Activated B cell treated with CpG ODN at 0.5 μM for 24 hours (primary cell): ENCODE measurements at regions of chr11 and their contacts with region 1.

Region 1: DNA sequence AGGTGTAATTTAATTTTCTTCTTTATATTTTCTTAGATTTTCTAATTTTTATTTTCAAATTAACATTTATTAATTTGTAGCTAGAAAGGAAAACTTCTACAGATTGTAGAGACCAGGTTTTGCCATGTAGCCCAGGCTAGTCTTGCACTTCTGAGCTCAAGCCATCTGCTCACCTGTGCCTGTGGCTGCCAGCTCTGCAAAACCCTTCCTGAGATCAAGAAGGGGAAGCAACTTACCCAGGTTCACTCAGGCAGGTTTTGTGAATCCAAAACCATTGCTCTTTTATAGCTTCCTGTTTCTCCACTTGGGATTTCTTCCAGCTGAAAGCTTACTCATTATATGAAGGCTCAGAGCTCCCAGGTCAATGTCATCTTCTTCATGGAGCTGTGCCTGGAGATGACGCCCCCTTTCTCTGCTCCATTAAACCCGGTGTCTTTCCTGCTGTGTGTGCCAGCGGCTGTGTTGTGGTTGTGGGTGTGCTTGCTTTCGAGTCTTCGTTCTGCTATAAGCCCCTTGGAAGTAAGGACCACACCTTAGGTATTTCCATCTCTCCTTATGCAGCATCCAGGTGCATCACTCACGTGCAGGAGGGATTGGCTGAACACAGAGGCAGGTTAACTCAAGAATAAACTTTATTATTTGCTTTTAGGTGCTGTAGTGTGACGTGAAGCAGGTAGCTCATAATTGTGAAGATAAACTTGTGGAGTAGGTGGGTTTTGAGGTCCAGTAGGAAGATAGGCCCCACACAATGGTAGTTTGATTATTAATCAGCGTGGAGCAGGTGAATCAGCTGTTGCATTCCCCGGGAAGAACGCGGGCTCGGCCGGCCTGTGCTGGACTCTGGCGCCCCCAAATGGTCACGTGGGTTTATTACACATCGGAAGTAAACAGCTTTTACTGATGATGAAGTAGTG is 42.2 kb upstream of the INCENP start:
- DNase-seq: peak; percentile 65
- ATAC-seq: peak; percentile 82
- H3K4me3 Mint-ChIP-seq: peak overlapping the region; percentile 5
- H3K27ac Mint-ChIP-seq: no peak overlapping the region
- H3K4me1 Mint-ChIP-seq: peaks cover 7% of the 10 kb centered on the region
- H3K27me3 Mint-ChIP-seq: no peaks in the 10 kb centered on the region
- CTCF ChIP-seq: peak; percentile 59

Region 2: DNA sequence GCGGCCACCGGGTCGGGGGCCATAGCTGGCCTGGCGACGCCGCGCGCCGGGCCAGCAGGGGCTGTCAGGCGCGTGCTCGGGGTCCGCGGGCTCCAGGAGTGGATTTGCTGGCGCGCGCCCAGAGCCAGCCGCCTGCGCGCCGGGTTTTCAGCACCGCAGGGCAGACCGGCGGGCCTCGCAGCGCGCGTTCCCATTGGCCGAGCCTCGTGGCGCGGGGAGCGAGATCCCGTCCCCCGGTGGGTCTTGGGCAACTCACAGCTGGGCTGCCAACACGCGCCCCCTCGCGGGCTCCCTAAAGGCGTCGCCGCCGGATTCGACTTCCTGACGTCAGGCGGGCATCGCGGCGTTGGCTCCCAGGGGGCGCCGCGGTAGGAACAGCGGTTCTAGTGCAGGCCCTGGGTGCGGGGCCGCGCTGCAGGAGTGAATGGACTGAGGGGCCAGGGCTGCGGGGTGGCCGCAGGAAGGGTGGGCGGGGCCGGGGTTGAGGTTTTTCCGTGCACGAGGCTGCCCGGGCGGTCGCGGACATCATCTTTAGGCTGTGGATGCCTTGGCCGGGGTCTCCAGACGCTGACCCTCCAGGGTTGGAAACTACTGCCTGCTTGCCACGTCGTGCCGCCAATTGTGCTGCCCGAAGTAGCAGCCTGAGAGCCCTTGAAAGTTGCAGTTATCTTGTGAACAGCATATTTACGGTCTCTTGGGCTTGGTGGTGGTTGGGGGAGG is 264.7 kb before region 1 on chr11 and contains the start of gene FADS1:
- CTCF ChIA-PET with region 1: interaction called, 14 read pairs
- POLR2A ChIA-PET with region 1: interaction called, 4 read pairs
- intact Hi-C with region 1: no loop called
- DNase-seq: peak; percentile 75
- ATAC-seq: peak; percentile 63
- H3K4me3 Mint-ChIP-seq: peak within 1 kb of the TSS; percentile 92
- H3K27ac Mint-ChIP-seq: peak within 1 kb of the TSS; percentile 72
- H3K4me1 Mint-ChIP-seq: peaks cover 16% of the 10 kb centered on the region
- H3K27me3 Mint-ChIP-seq: peaks cover 4% of the 10 kb centered on the region
- CTCF ChIP-seq: no peak
- total RNA-seq, gene FADS1: 19.6 and 23.3 TPM in 2 replicates

Region 3: GRCh38 chr11:61879711-61880430 is 201.8 kb before region 1 on chr11:
- CTCF ChIA-PET with region 1: interaction called, 17 read pairs
- POLR2A ChIA-PET with region 1: no interaction called
- intact Hi-C with region 1: no loop called
- DNase-seq: peak; percentile 37
- ATAC-seq: peak; percentile 76
- H3K4me3 Mint-ChIP-seq: peak overlapping the region; percentile 85
- H3K27ac Mint-ChIP-seq: peak overlapping the region; percentile 93
- H3K4me1 Mint-ChIP-seq: peaks cover 50% of the 10 kb centered on the region
- H3K27me3 Mint-ChIP-seq: no peaks in the 10 kb centered on the region
- CTCF ChIP-seq: no peak

Region 4: GRCh38 chr11:61899146-61899841 is 182.3 kb before region 1 on chr11:
- CTCF ChIA-PET with region 1: interaction called, 298 read pairs
- POLR2A ChIA-PET with region 1: interaction called, 22 read pairs
- intact Hi-C with region 1: loop called (anchors 1 kb)
- DNase-seq: peak; percentile 97
- ATAC-seq: peak; percentile 99
- H3K4me3 Mint-ChIP-seq: no peak overlapping the region
- H3K27ac Mint-ChIP-seq: peak overlapping the region; percentile 50
- H3K4me1 Mint-ChIP-seq: peaks cover 22% of the 10 kb centered on the region
- H3K27me3 Mint-ChIP-seq: no peaks in the 10 kb centered on the region
- CTCF ChIP-seq: peak; percentile 90

Region 5: GRCh38 chr11:61954851-61955421 is 126.7 kb before region 1 on chr11:
- CTCF ChIA-PET with region 1: interaction called, 118 read pairs
- POLR2A ChIA-PET with region 1: no interaction called
- intact Hi-C with region 1: loop called (anchors 2 kb)
- DNase-seq: no peak
- ATAC-seq: peak; percentile 40
- H3K4me3 Mint-ChIP-seq: peak overlapping the region; percentile 68
- H3K27ac Mint-ChIP-seq: no peak overlapping the region
- H3K4me1 Mint-ChIP-seq: peaks cover 25% of the 10 kb centered on the region
- H3K27me3 Mint-ChIP-seq: peaks cover 2% of the 10 kb centered on the region
- CTCF ChIP-seq: no peak

Region 6: GRCh38 chr11:62108017-62108750 is 26.5 kb after region 1 on chr11:
- CTCF ChIA-PET with region 1: interaction called, 51 read pairs
- POLR2A ChIA-PET with region 1: interaction called, 3 read pairs
- intact Hi-C with region 1: no loop called
- DNase-seq: no peak
- ATAC-seq: peak; percentile 50
- H3K4me3 Mint-ChIP-seq: no peak overlapping the region
- H3K27ac Mint-ChIP-seq: no peak overlapping the region
- H3K4me1 Mint-ChIP-seq: peaks cover 7% of the 10 kb centered on the region
- H3K27me3 Mint-ChIP-seq: peaks cover 4% of the 10 kb centered on the region
- CTCF ChIP-seq: peak; percentile 33